PC-9 (cell line): ENCODE measurements at regions of chrX and their contacts with region 1.

Region 1: DNA sequence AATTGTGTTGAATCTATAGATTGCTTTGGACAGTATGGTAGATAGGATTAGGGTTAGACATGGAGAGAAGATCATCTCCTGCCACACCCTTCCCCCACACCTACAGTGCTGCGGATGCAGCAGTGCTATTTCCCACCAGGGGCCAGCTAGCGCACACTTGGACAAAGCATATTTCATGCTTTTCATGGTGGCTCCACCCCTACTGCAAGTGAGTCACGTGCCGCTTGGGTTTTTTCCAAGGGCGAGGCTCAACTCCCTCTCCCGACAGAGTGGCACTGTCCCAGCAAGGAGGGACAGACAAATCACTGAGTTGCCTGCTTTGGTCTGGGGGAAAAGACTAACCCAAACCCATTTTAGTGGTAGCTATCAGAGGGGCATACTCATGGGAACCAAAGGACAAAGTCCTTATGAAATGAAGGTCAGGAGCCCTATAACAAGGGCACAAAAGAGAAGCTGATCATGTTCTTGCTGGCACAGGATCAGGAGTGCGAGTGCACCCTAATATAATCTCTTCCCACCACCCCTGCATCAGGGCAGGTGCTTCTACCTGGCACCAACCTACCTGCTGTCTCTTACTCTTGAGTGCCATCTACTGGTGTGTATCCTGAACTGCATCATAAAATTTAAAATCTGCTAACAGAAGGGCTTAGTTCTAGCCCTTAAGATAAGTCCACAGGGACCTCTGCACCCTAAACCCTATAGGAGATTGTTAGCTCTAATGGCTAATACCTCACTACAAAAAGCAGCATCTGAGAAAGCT is 55.1 kb upstream of the PGAM4 start:
- DNase-seq: peak; percentile 32 to 40
- H3K4me3 ChIP-seq: no peak overlapping the region
- H3K27ac ChIP-seq: no peak overlapping the region
- H3K4me1 ChIP-seq: peaks cover 12% of the 10 kb centered on the region
- H3K27me3 ChIP-seq: no peaks in the 10 kb centered on the region
- CTCF ChIP-seq: peak; percentile 89

Region 2: GRCh38 chrX:77679145-77679544 is 345.4 kb before region 1 on chrX:
- CTCF ChIA-PET with region 1: no interaction called
- POLR2A ChIA-PET with region 1: no interaction called
- intact Hi-C with region 1: no loop called
- DNase-seq: no peak
- H3K4me3 ChIP-seq: no peak overlapping the region
- H3K27ac ChIP-seq: no peak overlapping the region
- H3K4me1 ChIP-seq: no peaks in the 10 kb centered on the region
- H3K27me3 ChIP-seq: no peaks in the 10 kb centered on the region
- CTCF ChIP-seq: no peak

Region 3: DNA sequence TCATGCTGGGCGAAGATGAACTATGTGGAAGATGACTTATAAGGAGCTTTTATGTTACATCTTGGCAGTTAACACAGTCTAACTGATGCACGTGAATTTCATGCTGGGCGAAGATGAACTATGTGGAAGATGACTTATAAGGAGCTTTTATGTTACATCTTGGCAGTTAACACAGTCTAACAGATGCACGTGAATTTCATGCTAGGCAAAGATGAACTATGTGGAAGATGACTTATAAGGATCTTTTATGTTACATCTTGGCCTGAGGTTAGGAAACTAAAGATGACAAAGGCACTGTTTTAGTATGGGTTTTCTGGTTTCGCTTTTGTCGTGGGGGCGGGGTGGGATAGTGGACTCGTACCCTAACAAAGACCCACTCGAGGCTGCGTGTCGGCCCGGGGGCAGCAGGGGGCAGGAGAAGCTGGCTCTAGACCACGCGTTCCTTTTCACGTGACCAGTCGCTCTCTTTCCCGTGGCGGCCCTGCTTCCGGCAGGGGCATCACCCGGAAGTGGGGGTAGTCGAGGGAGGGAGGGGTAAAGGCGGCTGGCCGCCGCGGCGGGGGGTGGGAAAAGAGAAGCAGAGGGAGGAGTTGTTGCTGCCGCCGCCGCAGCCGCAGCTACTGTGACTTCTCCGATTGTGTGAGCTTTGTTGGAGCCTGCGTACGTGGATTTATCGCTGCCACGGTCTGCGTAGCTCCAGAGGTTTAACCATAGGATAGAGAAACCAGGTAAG is 114.3 kb before region 1 on chrX and contains the start of gene ATP7A:
- CTCF ChIA-PET with region 1: interaction called, 4 read pairs
- POLR2A ChIA-PET with region 1: no interaction called
- intact Hi-C with region 1: loop called (anchors 1 kb)
- DNase-seq: peak; percentile 78 to 85
- H3K4me3 ChIP-seq: peak within 1 kb of the TSS; percentile 92
- H3K27ac ChIP-seq: peak within 1 kb of the TSS; percentile 67
- H3K4me1 ChIP-seq: peaks cover 11% of the 10 kb centered on the region
- H3K27me3 ChIP-seq: no peaks in the 10 kb centered on the region
- CTCF ChIP-seq: peak; percentile 63
- total RNA-seq, gene ATP7A: 13.0 and 13.8 TPM in 2 replicates

Region 4: GRCh38 chrX:77953708-77954107 is 70.8 kb before region 1 on chrX:
- CTCF ChIA-PET with region 1: no interaction called
- POLR2A ChIA-PET with region 1: no interaction called
- intact Hi-C with region 1: no loop called
- DNase-seq: peak in 1 of 2 experiments; percentile 53
- H3K4me3 ChIP-seq: no peak overlapping the region
- H3K27ac ChIP-seq: peak overlapping the region; percentile 47
- H3K4me1 ChIP-seq: peaks cover 17% of the 10 kb centered on the region
- H3K27me3 ChIP-seq: no peaks in the 10 kb centered on the region
- CTCF ChIP-seq: no peak